Activated CD8-positive, alpha-beta T cell treated with anti-CD3 and anti-CD28 coated beads for 36 hours (primary cell): ENCODE measurements at regions of chr4 and their contacts with region 1.

Region 1: DNA sequence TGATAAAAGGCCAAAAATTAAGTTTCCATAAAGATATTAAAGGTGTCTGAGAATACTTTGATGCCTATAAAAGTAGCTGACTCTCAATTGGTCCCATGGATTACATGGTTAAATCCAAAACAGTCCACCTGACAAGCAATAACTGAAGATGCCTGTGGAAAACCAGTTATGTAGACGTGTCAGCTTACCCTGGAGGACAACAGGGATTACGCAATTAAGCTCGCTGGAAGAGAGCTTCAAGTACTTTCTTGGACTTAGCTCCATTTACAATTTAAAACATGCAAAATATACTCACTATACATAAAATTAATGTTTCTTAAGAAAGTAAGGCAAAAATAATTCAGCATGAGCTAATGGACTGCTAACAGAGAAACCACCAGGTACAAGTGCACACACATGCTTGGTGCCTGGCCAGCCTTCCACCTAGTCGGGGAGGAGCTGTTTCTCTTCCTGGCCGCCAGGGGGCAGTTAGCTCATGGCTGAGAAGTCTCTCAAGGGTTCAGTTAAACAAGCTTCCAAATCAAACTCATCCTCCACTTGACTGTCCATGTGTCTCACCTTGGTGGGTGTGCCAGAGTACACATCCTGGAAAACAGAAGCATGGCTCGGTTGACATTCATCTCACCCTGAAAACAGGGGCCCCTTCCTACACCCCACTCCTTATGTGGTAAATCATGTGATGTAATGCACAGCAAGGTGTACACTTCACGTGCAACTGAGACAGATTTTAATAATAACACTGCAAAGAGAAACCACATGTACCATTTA is 9.2 kb upstream of the FAM53A start:
- DNase-seq: peak; percentile 80
- ATAC-seq: peak; percentile 96
- H3K4me3 Mint-ChIP-seq: no peak overlapping the region
- H3K27ac Mint-ChIP-seq: peak overlapping the region; percentile 70
- H3K4me1 Mint-ChIP-seq: peaks cover 3% of the 10 kb centered on the region
- H3K27me3 Mint-ChIP-seq: no peaks in the 10 kb centered on the region
- CTCF ChIP-seq: peak; percentile 86

Region 2: GRCh38 chr4:1712216-1713002 is 19.1 kb after region 1 on chr4 and contains the start of gene SLBP:
- CTCF ChIA-PET with region 1: interaction called, 257 read pairs
- POLR2A ChIA-PET with region 1: interaction called, 76 read pairs
- intact Hi-C with region 1: no loop called
- DNase-seq: peak; percentile 99
- ATAC-seq: peak; percentile 91
- H3K4me3 Mint-ChIP-seq: peak within 1 kb of the TSS; percentile 92
- H3K27ac Mint-ChIP-seq: peak within 1 kb of the TSS; percentile 100
- H3K4me1 Mint-ChIP-seq: peaks cover 54% of the 10 kb centered on the region
- H3K27me3 Mint-ChIP-seq: no peaks in the 10 kb centered on the region
- CTCF ChIP-seq: no peak
- total RNA-seq, gene SLBP: 115 to 117 TPM

Region 3: GRCh38 chr4:1726146-1726934 is 33.0 kb after region 1 on chr4:
- CTCF ChIA-PET with region 1: interaction called, 257 read pairs
- POLR2A ChIA-PET with region 1: interaction called, 31 read pairs
- intact Hi-C with region 1: loop called (anchors 2 kb)
- DNase-seq: peak; percentile 95
- ATAC-seq: peak; percentile 29
- H3K4me3 Mint-ChIP-seq: no peak overlapping the region
- H3K27ac Mint-ChIP-seq: peak overlapping the region; percentile 73
- H3K4me1 Mint-ChIP-seq: peaks cover 58% of the 10 kb centered on the region
- H3K27me3 Mint-ChIP-seq: no peaks in the 10 kb centered on the region
- CTCF ChIP-seq: peak; percentile 95

Region 4: GRCh38 chr4:1740021-1740545 is 46.8 kb after region 1 on chr4:
- CTCF ChIA-PET with region 1: interaction called, 13 read pairs
- POLR2A ChIA-PET with region 1: no interaction called
- intact Hi-C with region 1: no loop called
- DNase-seq: no peak
- ATAC-seq: no peak
- H3K4me3 Mint-ChIP-seq: no peak overlapping the region
- H3K27ac Mint-ChIP-seq: no peak overlapping the region
- H3K4me1 Mint-ChIP-seq: no peaks in the 10 kb centered on the region
- H3K27me3 Mint-ChIP-seq: no peaks in the 10 kb centered on the region
- CTCF ChIP-seq: no peak